Sigmoid colon (tissue), 7 donors: ENCODE measurements at regions of chr14 and their contacts with region 1.

Region 1: GRCh38 chr14:35140718-35141581 is 18.6 kb downstream of the PRORP start:
- DNase-seq: no peak
- H3K4me3 ChIP-seq: no peak overlapping the region
- H3K27ac ChIP-seq: no peak overlapping the region
- H3K4me1 ChIP-seq: no peaks in the 10 kb centered on the region
- H3K27me3 ChIP-seq: no peaks in the 10 kb centered on the region
- CTCF ChIP-seq: peak in 3 of 4 experiments; percentile 8 to 38 (median 20)
- EP300 ChIP-seq: no peak
- POLR2A ChIP-seq: no peak

Region 2: DNA sequence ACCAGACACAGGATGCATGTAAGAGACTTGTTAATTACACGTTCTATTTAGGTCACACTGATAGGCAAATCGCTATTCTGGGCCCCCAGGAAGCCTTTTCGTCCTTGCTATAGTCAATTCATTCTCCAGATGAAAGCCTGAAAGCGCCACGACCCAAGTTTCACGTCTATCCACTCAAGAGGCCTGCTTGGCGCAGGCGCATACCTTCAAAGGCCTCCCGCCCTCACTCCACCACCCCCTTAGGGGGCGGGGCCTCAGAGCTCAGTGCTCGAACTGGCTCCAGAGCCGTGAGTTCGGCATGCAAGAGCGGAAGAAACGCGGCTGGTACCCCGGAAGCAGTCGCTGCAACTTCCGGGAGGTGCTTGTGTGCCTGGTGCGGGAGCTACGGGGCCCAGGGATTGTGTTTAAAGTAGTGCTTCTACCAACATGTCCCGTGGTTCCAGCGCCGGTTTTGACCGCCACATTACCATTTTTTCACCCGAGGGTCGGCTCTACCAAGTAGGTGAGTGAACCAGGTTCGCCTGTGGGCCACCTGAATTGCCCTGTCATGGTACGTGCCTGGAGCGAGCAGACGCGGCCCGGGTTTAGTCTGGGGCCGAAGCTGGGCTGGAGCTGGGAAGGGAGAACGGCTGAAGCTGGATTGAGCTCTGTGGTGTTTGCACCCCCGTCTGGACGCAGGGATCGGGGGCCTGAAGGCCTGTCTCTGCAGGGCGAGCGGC is 151.3 kb after region 1 on chr14 and contains the start of gene PSMA6:
- intact Hi-C with region 1: no loop called
- DNase-seq: peak; percentile 99
- H3K4me3 ChIP-seq: peak within 1 kb of the TSS; percentile 77 to 89 (median 80)
- H3K27ac ChIP-seq: peak within 1 kb of the TSS; percentile 89 to 96 (median 92)
- H3K4me1 ChIP-seq: peaks cover 0 to 49% (median 40%) of the 10 kb centered on the region in 4 donors
- H3K27me3 ChIP-seq: no peaks in the 10 kb centered on the region
- CTCF ChIP-seq: no peak
- EP300 ChIP-seq: peak in 1 of 4 donors; percentile 70
- POLR2A ChIP-seq: peak; percentile 81 to 86
- total RNA-seq, gene PSMA6: 104 to 203 (median 169) TPM

Region 3: GRCh38 chr14:35412272-35413056 is 271.5 kb after region 1 on chr14:
- intact Hi-C with region 1: loop called (anchors 2 kb)
- DNase-seq: peak; percentile 63
- H3K4me3 ChIP-seq: no peak overlapping the region
- H3K27ac ChIP-seq: peak overlapping the region; percentile 3 to 56 (median 30)
- H3K4me1 ChIP-seq: peaks cover 0 to 20% (median 6%) of the 10 kb centered on the region in 4 donors
- H3K27me3 ChIP-seq: no peaks in the 10 kb centered on the region
- CTCF ChIP-seq: no peak
- EP300 ChIP-seq: no peak
- POLR2A ChIP-seq: no peak

Region 4: DNA sequence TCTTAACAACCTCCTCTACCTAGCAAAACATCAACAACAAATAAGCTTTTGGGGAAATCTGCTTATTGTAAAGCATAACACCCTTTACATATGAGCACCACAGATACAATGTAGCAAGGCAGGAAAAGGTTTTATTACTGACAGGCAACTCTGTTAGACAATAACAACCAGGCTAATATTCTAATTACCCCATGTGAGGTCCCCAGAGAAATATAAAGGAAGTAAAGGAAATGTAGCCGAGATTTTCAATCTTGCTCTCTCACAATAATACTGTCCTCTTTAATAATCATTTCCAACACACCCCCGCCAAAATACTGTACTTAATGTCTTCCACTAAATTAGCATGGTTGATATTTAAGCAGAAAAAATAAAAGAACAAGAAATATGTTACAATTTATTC is 379.0 kb after region 1 on chr14:
- intact Hi-C with region 1: no loop called
- DNase-seq: no peak
- H3K4me3 ChIP-seq: no peak overlapping the region
- H3K27ac ChIP-seq: no peak overlapping the region
- H3K4me1 ChIP-seq: no peaks in the 10 kb centered on the region
- H3K27me3 ChIP-seq: no peaks in the 10 kb centered on the region
- CTCF ChIP-seq: no peak
- EP300 ChIP-seq: no peak
- POLR2A ChIP-seq: no peak